ENCODE measurements at regions of chr15 and their contacts with region 1.

Region 1: DNA sequence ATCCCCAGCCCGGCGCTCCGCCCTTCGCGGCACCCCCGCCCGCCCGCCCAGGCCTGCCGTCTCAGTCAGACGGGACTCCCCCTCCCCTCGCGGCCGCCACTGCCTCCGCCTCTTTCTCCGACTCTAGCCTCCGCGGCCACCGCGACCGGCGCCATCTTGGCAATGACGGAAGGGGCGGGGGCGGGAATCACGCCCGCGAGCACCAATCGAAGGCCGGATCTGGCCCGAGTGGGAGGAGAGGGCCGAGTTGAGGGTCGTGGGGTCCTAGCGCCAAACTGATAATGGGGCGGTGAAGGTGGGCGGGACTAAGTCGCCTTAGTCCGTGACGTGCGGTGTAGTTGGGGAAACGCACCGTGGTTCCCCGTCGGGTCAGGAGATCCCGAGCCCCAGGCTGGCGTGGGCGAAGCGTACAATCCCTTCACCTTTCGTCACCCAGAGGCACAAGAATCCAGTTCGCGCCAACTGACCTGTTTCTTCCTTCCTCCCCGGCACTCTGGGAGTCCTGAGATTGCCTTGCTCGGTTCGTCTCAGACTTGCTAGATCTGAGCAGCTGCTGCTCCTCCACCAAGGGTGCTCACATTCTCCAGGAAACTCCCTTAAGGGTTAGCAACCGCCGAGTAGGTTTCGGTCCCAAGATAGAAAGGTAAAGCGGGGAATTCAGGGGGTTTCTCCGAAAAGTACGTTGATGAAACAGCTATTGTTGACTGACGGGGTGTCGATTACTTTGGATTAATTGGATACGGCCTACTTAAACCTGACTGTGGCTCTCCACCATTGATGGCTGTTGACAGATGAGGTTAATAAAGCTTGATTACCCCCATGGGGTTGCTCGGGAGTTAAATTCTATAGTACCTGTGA is at the start of gene DENND4A:
- DNase-seq: peak; percentile 99
- H3K4me3 ChIP-seq: peak within 1 kb of the TSS; percentile 56 to 88 (median 83)
- H3K27ac ChIP-seq: peak within 1 kb of the TSS; percentile 95
- H3K4me1 ChIP-seq: peaks cover 40% of the 10 kb centered on the region
- H3K27me3 ChIP-seq: no peaks in the 10 kb centered on the region
- CTCF ChIP-seq: no peak
- total RNA-seq, gene DENND4A: 16.8 to 21.7 TPM

Region 2: DNA sequence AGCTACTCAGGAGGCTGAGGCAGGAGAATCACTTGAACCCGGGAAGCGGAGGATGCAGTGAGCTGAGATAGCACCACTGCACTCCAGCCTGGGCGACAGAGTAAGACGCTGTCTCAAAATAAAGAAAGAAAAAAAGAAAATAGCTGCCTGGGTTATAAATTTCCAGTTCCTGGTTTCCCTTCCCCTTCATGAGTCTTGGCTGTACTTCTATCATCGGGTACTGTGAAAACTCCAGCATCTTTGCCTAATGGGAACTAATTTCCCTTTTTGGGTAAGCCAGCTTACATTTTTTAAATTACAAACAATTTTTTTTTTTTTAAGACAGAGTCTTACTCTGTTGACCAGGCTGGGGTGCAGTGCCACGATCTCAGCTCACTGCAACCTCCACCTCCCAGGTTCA is 15.3 kb before region 1 on chr15:
- CTCF ChIA-PET with region 1: no interaction called
- dilution Hi-C with region 1: no loop called
- in situ Hi-C with region 1: no loop called
- intact Hi-C with region 1: no loop called
- DNase-seq: no peak
- H3K4me3 ChIP-seq: no peak overlapping the region
- H3K27ac ChIP-seq: no peak overlapping the region
- H3K4me1 ChIP-seq: no peaks in the 10 kb centered on the region
- H3K27me3 ChIP-seq: no peaks in the 10 kb centered on the region
- CTCF ChIP-seq: no peak

Region 3: GRCh38 chr15:65836665-65837064 is 44.3 kb after region 1 on chr15:
- CTCF ChIA-PET with region 1: no interaction called
- dilution Hi-C with region 1: loop called (anchors 5 kb)
- in situ Hi-C with region 1: no loop called
- intact Hi-C with region 1: no loop called
- DNase-seq: no peak
- H3K4me3 ChIP-seq: no peak overlapping the region
- H3K27ac ChIP-seq: no peak overlapping the region
- H3K4me1 ChIP-seq: peaks cover 11% of the 10 kb centered on the region
- H3K27me3 ChIP-seq: no peaks in the 10 kb centered on the region
- CTCF ChIP-seq: peak in 1 of 2 donors; percentile 33

Measured in mammary epithelial cell (primary cell).